ENCODE measurements at regions of chr6 and their contacts with region 1.

Region 1: GRCh38 chr6:127554435-127555006 is 22.5 kb upstream of the C6orf58 start:
- DNase-seq: peak; percentile 30
- H3K4me3 ChIP-seq: no peak overlapping the region
- H3K27ac ChIP-seq: no peak overlapping the region
- H3K4me1 ChIP-seq: no peaks in the 10 kb centered on the region
- H3K27me3 ChIP-seq: no peaks in the 10 kb centered on the region
- CTCF ChIP-seq: peak; percentile 69
- EP300 ChIP-seq: no peak
- RAD21 ChIP-seq: peak; percentile 67

Region 2: DNA sequence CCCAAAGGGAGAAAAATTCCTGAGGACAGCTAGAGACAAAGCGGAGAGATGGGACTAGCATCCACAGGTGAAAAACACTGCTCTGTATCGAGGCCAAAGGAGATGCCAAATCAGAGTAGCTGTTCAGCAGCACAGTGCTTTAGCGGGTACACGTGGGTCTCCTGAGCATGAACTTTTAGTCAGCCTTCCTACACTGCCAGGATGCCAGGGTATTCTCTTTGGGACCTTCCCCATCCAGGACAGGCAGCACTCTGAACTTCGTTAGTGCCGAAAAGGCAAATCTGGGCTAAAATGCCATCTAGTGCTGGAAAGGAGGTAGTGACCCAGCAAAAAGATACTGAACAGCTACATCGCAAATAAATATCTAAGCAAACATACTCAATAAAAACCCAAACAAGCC is 87.4 kb after region 1 on chr6:
- CTCF ChIA-PET with region 1: interaction called, 12 read pairs
- POLR2A ChIA-PET with region 1: no interaction called
- DNase-seq: peak; percentile 28
- H3K4me3 ChIP-seq: peak overlapping the region in 1 of 2 experiments; percentile 47; a peak in 2 of 4 replicates
- H3K27ac ChIP-seq: no peak overlapping the region
- H3K4me1 ChIP-seq: no peaks in the 10 kb centered on the region; a peak in 1 of 4 replicates
- H3K27me3 ChIP-seq: no peaks in the 10 kb centered on the region
- CTCF ChIP-seq: peak; percentile 68
- EP300 ChIP-seq: no peak
- RAD21 ChIP-seq: peak; percentile 65